ENCODE measurements at regions of chr2 and their contacts with region 1.

Region 1: GRCh38 chr2:2057125-2057721 is 273.9 kb downstream of the MYT1L start:
- DNase-seq: peak; percentile 82 to 91 (median 88)
- ATAC-seq: peak; percentile 91 to 96 (median 94)
- H3K4me3 ChIP-seq: peak overlapping the region in 3 of 12 donors; percentile 6 to 30 (median 28)
- H3K27ac ChIP-seq: peak overlapping the region; percentile 59 to 93 (median 75)
- H3K4me1 ChIP-seq: peaks cover 0 to 21% (median 11%) of the 10 kb centered on the region in 12 donors
- H3K27me3 ChIP-seq: no peaks in the 10 kb centered on the region
- CTCF ChIP-seq: no peak
- POLR2A ChIP-seq: no peak

Region 2: DNA sequence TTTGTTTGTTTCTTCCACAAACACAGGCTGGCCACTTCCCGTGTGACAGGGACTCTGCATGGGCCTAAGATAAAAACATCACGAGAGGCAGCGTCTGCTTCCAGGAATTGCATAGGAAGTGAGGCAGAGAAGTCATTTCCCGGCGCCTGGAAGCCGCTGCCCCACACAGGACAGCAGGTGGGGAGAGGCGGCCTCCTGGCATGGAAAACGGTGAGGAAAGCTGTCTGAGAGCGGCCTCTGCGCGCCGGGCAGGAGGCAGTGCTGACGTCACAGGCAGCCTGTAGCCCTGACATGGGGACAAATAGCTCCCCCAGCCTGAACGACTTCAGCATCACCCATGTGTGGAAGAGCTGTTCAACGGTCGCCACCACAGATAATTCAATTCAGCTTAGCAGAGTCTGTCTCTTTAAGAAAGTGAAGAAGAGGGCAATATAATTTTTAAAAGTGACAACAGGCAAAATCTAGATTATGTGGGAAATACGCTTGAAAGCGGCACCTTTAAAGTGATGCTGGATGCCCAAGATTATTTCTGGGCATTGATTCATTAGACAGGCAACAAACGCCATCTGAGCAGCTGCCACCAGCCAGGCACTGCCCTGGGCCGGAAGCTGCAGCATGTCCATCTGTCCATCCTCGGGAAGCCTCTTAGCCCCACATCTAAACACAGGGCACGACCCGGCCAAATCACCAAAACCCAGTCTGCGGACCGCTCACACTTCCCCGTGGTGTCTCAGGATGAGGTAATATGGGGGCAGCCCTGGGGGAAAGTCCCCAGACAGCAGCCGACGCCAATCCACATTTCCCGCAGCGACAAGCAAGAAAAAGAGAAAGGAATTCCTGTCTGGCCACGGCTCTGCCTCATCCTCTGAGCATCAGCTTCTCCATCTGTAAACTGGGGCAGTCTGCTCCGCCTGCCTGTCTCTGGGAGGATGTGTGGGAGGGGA is 451.8 kb before region 1 on chr2:
- intact Hi-C with region 1: no loop called
- DNase-seq: peak; percentile 73 to 90 (median 78)
- ATAC-seq: peak; percentile 58 to 86 (median 66)
- H3K4me3 ChIP-seq: peak overlapping the region in 6 of 12 donors; percentile 0 to 31 (median 3)
- H3K27ac ChIP-seq: peak overlapping the region; percentile 19 to 86 (median 60)
- H3K4me1 ChIP-seq: peaks cover 0 to 53% (median 31%) of the 10 kb centered on the region in 12 donors
- H3K27me3 ChIP-seq: no peaks in the 10 kb centered on the region
- CTCF ChIP-seq: no peak
- POLR2A ChIP-seq: no peak

Region 3: DNA sequence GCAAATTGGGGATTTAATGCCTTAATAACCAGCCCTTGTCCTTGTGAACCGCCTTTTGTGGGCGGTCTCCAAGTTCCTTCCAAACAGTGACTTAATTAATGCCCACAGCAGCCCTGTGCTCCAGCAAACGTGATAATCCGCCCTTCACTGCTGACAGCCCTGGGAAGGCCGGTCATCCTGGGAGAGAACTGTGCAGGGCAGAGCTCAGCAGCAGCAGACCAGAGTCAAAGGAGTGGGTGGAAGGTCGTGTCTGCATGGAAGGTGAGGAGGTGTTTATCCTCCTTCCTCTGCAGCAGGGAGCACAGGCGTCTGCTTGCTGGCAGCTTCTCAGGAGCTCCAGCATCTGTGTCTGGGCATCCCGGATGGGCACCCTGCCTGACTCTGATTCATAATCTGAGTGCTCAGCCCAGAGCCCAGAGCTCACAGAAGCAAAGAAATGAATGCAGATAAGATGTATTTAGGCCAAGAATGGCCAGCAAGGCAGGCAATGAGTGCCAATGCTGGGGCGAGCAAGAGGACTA is 42.9 kb before region 1 on chr2:
- intact Hi-C with region 1: loop called in 2 of 10 experiments (anchors 2 kb)
- DNase-seq: peak in 3 of 5 donors; percentile 31 to 77 (median 55)
- ATAC-seq: peak; percentile 72 to 89 (median 78)
- H3K4me3 ChIP-seq: no peak overlapping the region
- H3K27ac ChIP-seq: peak overlapping the region in 8 of 12 donors; percentile 9 to 59 (median 35)
- H3K4me1 ChIP-seq: peaks cover 0 to 51% (median 20%) of the 10 kb centered on the region in 12 donors
- H3K27me3 ChIP-seq: no peaks in the 10 kb centered on the region
- CTCF ChIP-seq: no peak
- POLR2A ChIP-seq: no peak

Region 4: DNA sequence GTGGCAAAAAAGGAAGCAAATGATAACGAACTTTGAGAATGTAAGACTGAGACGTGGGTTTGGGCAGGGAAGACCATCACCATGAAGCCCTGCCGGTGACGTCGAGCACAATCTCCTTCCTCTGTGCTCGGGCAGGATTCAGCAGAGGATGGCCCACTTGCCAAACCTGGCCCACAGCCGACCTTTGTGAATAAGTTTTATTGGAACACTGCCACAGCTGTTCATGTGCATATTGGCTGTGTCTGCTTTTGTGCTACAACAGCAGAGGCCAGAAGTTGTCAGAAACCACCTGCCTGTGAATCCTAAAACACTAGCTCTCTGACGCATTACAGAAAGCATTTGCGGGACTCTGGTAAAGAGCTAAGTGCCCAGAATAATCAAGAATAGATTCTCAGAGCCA is 49.9 kb after region 1 on chr2:
- intact Hi-C with region 1: loop called in 1 of 10 experiments (anchors 1 kb)
- DNase-seq: peak in 4 of 5 donors; percentile 43 to 62 (median 54)
- ATAC-seq: peak in 3 of 4 donors; percentile 78 to 86 (median 83)
- H3K4me3 ChIP-seq: no peak overlapping the region
- H3K27ac ChIP-seq: peak overlapping the region in 2 of 12 donors; percentile 25 to 52
- H3K4me1 ChIP-seq: peaks cover 0 to 21% (median 11%) of the 10 kb centered on the region in 12 donors
- H3K27me3 ChIP-seq: peaks cover 0 to 10% (median 0%) of the 10 kb centered on the region in 9 donors
- CTCF ChIP-seq: no peak
- POLR2A ChIP-seq: no peak

Measured in heart left ventricle (tissue), 16 donors.